ENCODE measurements at regions of chr1 and their contacts with region 1.

Region 1: DNA sequence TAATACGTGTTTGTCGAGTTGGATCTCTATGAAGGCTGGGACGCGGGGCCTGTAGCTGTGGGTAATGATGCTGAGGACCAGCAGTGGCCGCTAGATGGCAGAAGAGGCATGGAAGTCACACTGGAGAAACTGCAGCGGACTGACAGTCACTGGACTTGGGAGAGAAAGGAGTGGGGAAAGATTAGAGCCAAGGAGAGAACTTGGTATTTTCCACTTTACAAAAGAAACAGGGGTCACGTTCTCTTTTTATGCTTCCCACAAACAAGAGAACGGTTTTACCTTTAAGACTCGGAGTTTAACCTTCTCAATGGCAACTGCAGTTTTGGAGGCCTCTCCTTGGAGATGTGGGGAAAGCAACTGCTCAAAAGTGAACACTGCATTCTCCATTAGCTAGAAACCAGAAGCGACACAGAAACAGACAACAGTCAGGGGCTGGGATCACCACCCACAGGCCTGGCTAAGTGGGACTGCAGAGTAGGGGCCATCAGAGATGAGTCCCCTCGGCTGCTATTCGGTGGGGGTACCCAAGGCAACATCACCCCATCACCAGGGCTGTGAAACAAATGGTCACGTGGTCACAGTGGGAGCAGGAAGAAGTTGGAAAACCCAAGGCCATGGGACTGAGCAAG is 51.1 kb upstream of the EDEM3 start:
- DNase-seq: peak; percentile 88
- H3K4me3 ChIP-seq: no peak overlapping the region
- H3K27ac ChIP-seq: no peak overlapping the region
- H3K4me1 ChIP-seq: no peaks in the 10 kb centered on the region
- H3K27me3 ChIP-seq: no peaks in the 10 kb centered on the region
- CTCF ChIP-seq: peak; percentile 95

Region 2: GRCh38 chr1:184610876-184611595 is 194.7 kb before region 1 on chr1:
- CTCF ChIA-PET with region 1: no interaction called
- POLR2A ChIA-PET with region 1: no interaction called
- intact Hi-C with region 1: no loop called
- DNase-seq: peak; percentile 59
- H3K4me3 ChIP-seq: peak overlapping the region; percentile 8
- H3K27ac ChIP-seq: peak overlapping the region; percentile 64
- H3K4me1 ChIP-seq: peaks cover 20% of the 10 kb centered on the region
- H3K27me3 ChIP-seq: no peaks in the 10 kb centered on the region
- CTCF ChIP-seq: no peak

Region 3: GRCh38 chr1:184929711-184930631 is 124.2 kb after region 1 on chr1:
- CTCF ChIA-PET with region 1: no interaction called
- POLR2A ChIA-PET with region 1: no interaction called
- intact Hi-C with region 1: no loop called
- DNase-seq: peak; percentile 45
- H3K4me3 ChIP-seq: no peak overlapping the region
- H3K27ac ChIP-seq: no peak overlapping the region
- H3K4me1 ChIP-seq: peaks cover 11% of the 10 kb centered on the region
- H3K27me3 ChIP-seq: no peaks in the 10 kb centered on the region
- CTCF ChIP-seq: no peak

Region 4: GRCh38 chr1:184982002-184982954 is 176.5 kb after region 1 on chr1:
- CTCF ChIA-PET with region 1: interaction called, 15 read pairs
- POLR2A ChIA-PET with region 1: no interaction called
- intact Hi-C with region 1: loop called (anchors 1 kb)
- DNase-seq: peak; percentile 83
- H3K4me3 ChIP-seq: no peak overlapping the region
- H3K27ac ChIP-seq: no peak overlapping the region
- H3K4me1 ChIP-seq: no peaks in the 10 kb centered on the region
- H3K27me3 ChIP-seq: no peaks in the 10 kb centered on the region
- CTCF ChIP-seq: peak; percentile 93